Lower leg skin (tissue), 4 donors: ENCODE measurements at regions of chr7 and their contacts with region 1.

Region 1: DNA sequence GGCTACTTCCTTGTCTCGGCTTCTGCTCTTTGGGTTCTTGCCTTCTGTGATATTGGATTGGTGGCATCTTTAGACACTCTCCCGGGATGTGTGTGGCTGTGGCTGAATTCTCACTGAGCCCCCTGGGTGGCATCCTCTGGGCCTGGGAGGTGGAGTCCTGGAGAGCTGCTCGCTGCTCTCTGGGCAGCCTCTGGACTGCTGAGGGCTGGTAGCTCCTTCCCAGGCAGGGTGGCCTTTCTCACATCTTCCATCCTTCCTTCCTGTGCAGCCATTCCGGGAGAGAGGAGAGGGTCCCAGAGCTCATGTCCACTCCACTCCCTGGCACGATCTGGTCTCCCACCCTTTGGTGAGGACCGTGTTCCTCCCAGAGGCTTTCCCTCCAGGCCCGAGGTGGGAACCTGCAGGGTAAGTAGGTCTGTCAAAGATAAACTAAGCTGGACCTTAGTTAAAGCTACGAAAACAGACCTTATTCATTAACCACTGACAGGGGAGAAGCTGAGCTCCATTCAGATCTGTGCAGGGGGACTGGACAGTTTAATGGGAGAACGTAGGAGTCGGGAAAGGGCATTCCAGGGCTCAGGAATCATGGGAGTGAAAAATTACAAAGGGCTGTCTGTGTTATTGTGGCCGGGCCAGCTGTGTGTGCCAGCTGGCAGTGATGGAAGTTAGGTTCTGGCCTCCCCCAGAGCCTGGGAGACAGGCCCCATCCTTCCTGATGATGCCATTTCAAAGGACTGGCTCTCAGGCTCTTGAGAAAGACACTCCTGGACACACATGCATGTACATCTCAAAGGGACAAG is 8.7 kb downstream of the ATP6V0E2 start:
- DNase-seq: peak in 1 of 2 donors; percentile 74
- H3K4me3 ChIP-seq: no peak overlapping the region
- CTCF ChIP-seq: no peak
- POLR2A ChIP-seq: no peak

Region 2: GRCh38 chr7:149261829-149262617 is 620.4 kb before region 1 on chr7 and contains the start of gene ZNF783:
- intact Hi-C with region 1: no loop called
- DNase-seq: peak; percentile 65 to 96
- H3K4me3 ChIP-seq: peak within 1 kb of the TSS; percentile 45
- CTCF ChIP-seq: no peak
- POLR2A ChIP-seq: no peak
- total RNA-seq, gene ZNF783: 6.8 to 17.2 (median 13.0) TPM

Region 3: DNA sequence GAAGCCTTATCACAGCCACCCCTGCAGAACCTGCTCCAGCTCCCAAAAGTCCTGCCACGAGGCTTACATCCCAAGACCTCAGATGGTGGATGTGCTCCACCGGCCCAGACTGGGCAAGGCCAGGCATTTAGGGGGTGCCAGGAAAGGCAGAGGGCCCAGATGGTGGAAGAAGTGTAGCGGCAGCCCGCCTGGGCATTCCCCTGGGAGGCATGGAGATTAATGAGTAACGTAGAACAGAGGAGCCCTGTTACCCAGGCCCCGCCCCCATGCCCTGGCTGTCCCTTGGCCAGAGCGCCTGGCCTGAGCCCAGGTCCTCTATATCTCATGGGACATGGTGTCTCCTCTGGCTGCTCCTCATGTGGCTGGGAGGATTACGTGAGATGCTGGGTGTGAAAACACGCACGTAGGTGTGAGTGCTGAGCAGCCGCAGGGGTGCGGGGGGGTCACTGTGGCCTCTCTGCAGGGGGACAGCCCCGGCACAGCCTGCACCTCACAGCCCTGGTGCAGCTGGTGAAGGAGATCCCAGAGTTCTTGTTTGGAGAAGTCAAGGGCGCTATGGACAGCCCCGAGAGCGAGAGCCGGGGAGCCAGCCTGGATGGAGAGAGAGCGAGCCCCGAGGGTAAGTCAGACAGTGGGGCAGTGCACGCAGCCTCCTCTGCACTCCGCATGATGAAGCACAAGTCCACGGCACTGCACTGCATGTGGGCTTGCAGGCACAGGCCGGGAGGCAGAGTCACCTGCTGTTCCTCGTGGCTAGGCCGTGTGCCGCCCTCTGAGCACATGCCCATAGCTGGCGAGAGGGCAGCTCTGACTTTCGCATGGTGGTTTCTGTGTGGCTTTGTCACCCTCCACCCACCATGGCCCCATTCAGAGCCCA is 161.8 kb before region 1 on chr7:
- intact Hi-C with region 1: loop called (anchors 1 kb)
- DNase-seq: peak in 1 of 2 donors; percentile 80
- H3K4me3 ChIP-seq: no peak overlapping the region
- CTCF ChIP-seq: no peak
- POLR2A ChIP-seq: no peak

Region 4: GRCh38 chr7:149799397-149800171 is 82.9 kb before region 1 on chr7:
- intact Hi-C with region 1: no loop called
- DNase-seq: no peak
- H3K4me3 ChIP-seq: no peak overlapping the region
- CTCF ChIP-seq: no peak
- POLR2A ChIP-seq: no peak